CD4-positive, alpha-beta memory T cell (primary cell): ENCODE measurements at regions of chr15 and their contacts with region 1.

Region 1: GRCh38 chr15:58987489-58988005 is at the start of gene RNF111:
- DNase-seq: peak; percentile 90 to 97 (median 91)
- H3K4me3 ChIP-seq: peak within 1 kb of the TSS; percentile 91 to 92
- H3K4me3 Mint-ChIP-seq: peak within 1 kb of the TSS; percentile 93 to 98 (median 96)
- H3K27ac ChIP-seq: peak within 1 kb of the TSS; percentile 89
- H3K27ac Mint-ChIP-seq: peak within 1 kb of the TSS; percentile 84 to 97 (median 94)
- H3K4me1 ChIP-seq: peaks cover 40% of the 10 kb centered on the region
- H3K4me1 Mint-ChIP-seq: peaks cover 31 to 52% (median 42%) of the 10 kb centered on the region in 4 donors
- H3K27me3 ChIP-seq: no peaks in the 10 kb centered on the region
- H3K27me3 Mint-ChIP-seq: no peaks in the 10 kb centered on the region
- total RNA-seq, gene RNF111: 54.9 to 60.9 TPM

Region 2: GRCh38 chr15:58749532-58750337 is 237.8 kb before region 1 on chr15 and contains the start of gene ADAM10:
- CTCF ChIA-PET with region 1: no interaction called
- POLR2A ChIA-PET with region 1: no interaction called
- intact Hi-C with region 1: loop called (anchors 5 kb)
- DNase-seq: peak; percentile 93 to 98 (median 94)
- H3K4me3 ChIP-seq: peak within 1 kb of the TSS; percentile 68 to 96
- H3K4me3 Mint-ChIP-seq: peak within 1 kb of the TSS; percentile 96 to 99 (median 97)
- H3K27ac ChIP-seq: peak within 1 kb of the TSS; percentile 79
- H3K27ac Mint-ChIP-seq: peak within 1 kb of the TSS; percentile 94 to 96 (median 95)
- H3K4me1 ChIP-seq: peaks cover 46% of the 10 kb centered on the region
- H3K4me1 Mint-ChIP-seq: peaks cover 26 to 49% (median 36%) of the 10 kb centered on the region in 4 donors
- H3K27me3 ChIP-seq: no peaks in the 10 kb centered on the region
- H3K27me3 Mint-ChIP-seq: no peaks in the 10 kb centered on the region
- total RNA-seq, gene ADAM10: 135 TPM

Region 3: DNA sequence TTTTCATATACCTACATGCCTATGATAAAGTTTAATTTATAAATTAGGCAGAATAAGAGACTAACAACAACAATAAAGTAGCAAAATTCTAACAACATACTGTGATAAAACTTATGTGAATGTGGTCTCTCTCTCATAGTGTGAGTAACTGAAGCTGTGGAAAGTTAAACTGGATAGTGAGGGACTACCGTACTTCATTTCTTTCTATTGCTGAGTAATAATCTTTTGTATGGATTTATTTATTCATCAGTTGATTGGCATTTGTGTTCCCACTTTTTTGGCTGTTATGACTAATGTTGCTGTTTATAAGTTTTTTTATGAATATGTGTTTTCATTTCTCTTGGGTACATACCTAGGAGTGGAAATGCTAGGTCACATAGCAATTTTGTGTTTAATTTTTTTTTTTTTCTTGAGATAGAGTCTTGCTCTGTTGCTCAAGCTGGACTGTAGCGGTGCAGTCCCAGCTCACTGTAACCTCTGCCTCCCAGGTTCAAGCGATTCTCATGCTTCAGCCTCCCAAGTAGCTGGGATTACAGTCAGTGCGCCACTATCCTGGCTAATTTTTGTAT is 40.9 kb after region 1 on chr15:
- CTCF ChIA-PET with region 1: no interaction called
- POLR2A ChIA-PET with region 1: no interaction called
- intact Hi-C with region 1: loop called (anchors 5 kb)
- DNase-seq: no peak
- H3K4me3 ChIP-seq: no peak overlapping the region
- H3K4me3 Mint-ChIP-seq: no peak overlapping the region
- H3K27ac ChIP-seq: no peak overlapping the region
- H3K27ac Mint-ChIP-seq: no peak overlapping the region
- H3K4me1 ChIP-seq: no peaks in the 10 kb centered on the region
- H3K4me1 Mint-ChIP-seq: peaks cover 28 to 49% (median 38%) of the 10 kb centered on the region in 4 donors
- H3K27me3 ChIP-seq: no peaks in the 10 kb centered on the region
- H3K27me3 Mint-ChIP-seq: no peaks in the 10 kb centered on the region

Region 4: DNA sequence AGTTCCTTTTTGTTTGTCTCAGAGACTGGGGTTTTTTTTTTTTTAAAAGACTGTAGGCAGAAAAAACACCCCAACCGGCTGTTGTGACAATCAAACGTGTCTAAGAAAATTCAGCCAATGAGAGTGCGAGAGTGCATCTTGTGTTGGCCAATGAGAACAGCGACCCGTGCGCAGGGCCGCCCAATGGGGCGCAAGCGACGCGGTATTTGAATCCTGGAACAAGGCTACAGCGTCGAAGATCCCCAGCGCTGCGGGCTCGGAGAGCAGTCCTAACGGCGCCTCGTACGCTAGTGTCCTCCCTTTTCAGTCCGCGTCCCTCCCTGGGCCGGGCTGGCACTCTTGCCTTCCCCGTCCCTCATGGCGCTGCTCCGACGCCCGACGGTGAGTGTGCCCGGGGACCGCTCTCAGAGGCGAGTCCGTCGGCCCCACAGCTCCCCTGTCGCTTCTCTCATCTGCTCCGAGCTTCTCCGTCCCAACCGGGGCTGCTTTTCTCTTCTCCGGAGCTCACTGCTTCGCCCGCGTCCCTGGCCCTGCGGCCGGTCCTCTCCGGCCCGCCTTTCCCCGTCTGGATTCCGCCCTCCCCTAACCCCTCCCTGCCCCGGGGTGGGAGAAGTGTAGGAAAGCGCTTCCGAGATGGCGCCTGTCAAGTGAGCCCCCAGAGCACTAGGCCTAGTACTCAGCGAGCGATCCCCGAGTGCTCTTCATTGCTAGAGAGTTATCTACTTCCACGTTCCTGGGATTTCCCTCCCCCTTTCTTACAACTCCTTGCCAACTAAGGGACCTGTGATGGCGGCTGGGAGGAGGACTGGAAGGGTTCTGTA is 117.6 kb after region 1 on chr15 and contains the start of gene CCNB2:
- CTCF ChIA-PET with region 1: no interaction called
- POLR2A ChIA-PET with region 1: no interaction called
- intact Hi-C with region 1: loop called (anchors 2 kb)
- DNase-seq: peak; percentile 85 to 91 (median 87)
- H3K4me3 ChIP-seq: peak within 1 kb of the TSS; percentile 66 to 80
- H3K4me3 Mint-ChIP-seq: peak within 1 kb of the TSS; percentile 91 to 96 (median 93)
- H3K27ac ChIP-seq: peak within 1 kb of the TSS; percentile 68
- H3K27ac Mint-ChIP-seq: peak within 1 kb of the TSS; percentile 92 to 99 (median 97)
- H3K4me1 ChIP-seq: peaks cover 6% of the 10 kb centered on the region
- H3K4me1 Mint-ChIP-seq: peaks cover 5 to 19% (median 13%) of the 10 kb centered on the region in 4 donors
- H3K27me3 ChIP-seq: no peaks in the 10 kb centered on the region
- H3K27me3 Mint-ChIP-seq: no peaks in the 10 kb centered on the region
- total RNA-seq, gene CCNB2: 0.44 TPM in 1 of 2 experiments, not detected in the other

Region 5: GRCh38 chr15:59251001-59251845 is 263.7 kb after region 1 on chr15:
- CTCF ChIA-PET with region 1: no interaction called
- POLR2A ChIA-PET with region 1: no interaction called
- intact Hi-C with region 1: no loop called
- DNase-seq: no peak
- H3K4me3 ChIP-seq: no peak overlapping the region
- H3K4me3 Mint-ChIP-seq: no peak overlapping the region
- H3K27ac ChIP-seq: no peak overlapping the region
- H3K27ac Mint-ChIP-seq: peak overlapping the region in 1 of 7 donors; percentile 64
- H3K4me1 ChIP-seq: peaks cover 14% of the 10 kb centered on the region
- H3K4me1 Mint-ChIP-seq: peaks cover 9 to 14% (median 10%) of the 10 kb centered on the region in 4 donors
- H3K27me3 ChIP-seq: no peaks in the 10 kb centered on the region
- H3K27me3 Mint-ChIP-seq: no peaks in the 10 kb centered on the region

Region 6: GRCh38 chr15:59656897-59657634 is 669.5 kb after region 1 on chr15 and contains the start of gene GTF2A2:
- CTCF ChIA-PET with region 1: no interaction called
- POLR2A ChIA-PET with region 1: no interaction called
- intact Hi-C with region 1: loop called (anchors 2 kb)
- DNase-seq: peak; percentile 90 to 95 (median 91)
- H3K4me3 ChIP-seq: peak within 1 kb of the TSS; percentile 71 to 76
- H3K4me3 Mint-ChIP-seq: peak within 1 kb of the TSS in 7 of 8 donors; percentile 6 to 62 (median 53)
- H3K27ac ChIP-seq: peak within 1 kb of the TSS; percentile 79
- H3K27ac Mint-ChIP-seq: peak within 1 kb of the TSS in 4 of 7 donors; percentile 28 to 89 (median 51)
- H3K4me1 ChIP-seq: peaks cover 29% of the 10 kb centered on the region
- H3K4me1 Mint-ChIP-seq: peaks cover 10 to 16% (median 13%) of the 10 kb centered on the region in 4 donors
- H3K27me3 ChIP-seq: no peaks in the 10 kb centered on the region
- H3K27me3 Mint-ChIP-seq: no peaks in the 10 kb centered on the region
- total RNA-seq, gene GTF2A2: 58.5 to 64.6 TPM